ENCODE measurements at regions of chr2 and their contacts with region 1.

Region 1: GRCh38 chr2:47842846-47843245 is 59.9 kb downstream of the MSH6 start:
- DNase-seq: peak; percentile 26
- H3K4me3 ChIP-seq: no peak overlapping the region
- H3K27ac ChIP-seq: 0 out of 2 replicates have a peak overlapping the region, but pooled peaks have one; percentile 16
- H3K4me1 ChIP-seq: no peaks in the 10 kb centered on the region
- H3K27me3 ChIP-seq: no peaks in the 10 kb centered on the region

Region 2: DNA sequence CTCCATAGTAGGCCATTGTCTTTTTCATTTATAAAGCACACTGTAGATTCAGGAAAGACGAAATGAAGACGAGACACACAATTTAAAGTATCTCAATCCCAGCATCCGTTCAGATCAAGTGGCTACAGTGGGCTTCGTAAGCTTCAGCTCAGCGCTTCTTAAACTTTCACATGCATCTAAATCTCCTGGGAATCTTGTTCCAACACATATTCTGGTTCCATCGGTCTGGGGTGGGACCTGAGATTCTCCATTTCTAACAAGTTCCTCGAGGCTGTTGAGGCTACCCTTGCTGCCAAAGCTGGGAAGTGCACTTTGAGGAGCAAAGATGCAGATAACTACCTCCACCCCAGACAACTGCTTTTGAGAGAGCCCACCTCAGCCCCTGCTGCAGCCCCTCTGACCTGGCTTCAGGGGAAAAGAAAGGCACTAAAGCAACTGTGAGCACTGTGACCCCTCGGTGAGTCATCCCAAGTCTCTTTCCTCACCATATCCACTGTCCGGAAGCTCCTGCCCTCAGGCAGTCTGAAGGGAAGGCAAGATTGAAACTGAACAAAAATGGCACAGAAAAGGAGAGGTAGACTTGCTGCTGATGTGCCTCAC is 264.6 kb after region 1 on chr2:
- in situ Hi-C with region 1: loop called (anchors 10 kb)
- DNase-seq: peak; percentile 90
- H3K4me3 ChIP-seq: peak overlapping the region; percentile 47; the same call in 1 of the 2 replicates
- H3K27ac ChIP-seq: peak overlapping the region; percentile 91
- H3K4me1 ChIP-seq: peaks cover 25% of the 10 kb centered on the region
- H3K27me3 ChIP-seq: no peaks in the 10 kb centered on the region

Measured in GM23248 (cell line).